Mammary epithelial cell (primary cell): ENCODE measurements at regions of chr5 and their contacts with region 1.

Region 1: DNA sequence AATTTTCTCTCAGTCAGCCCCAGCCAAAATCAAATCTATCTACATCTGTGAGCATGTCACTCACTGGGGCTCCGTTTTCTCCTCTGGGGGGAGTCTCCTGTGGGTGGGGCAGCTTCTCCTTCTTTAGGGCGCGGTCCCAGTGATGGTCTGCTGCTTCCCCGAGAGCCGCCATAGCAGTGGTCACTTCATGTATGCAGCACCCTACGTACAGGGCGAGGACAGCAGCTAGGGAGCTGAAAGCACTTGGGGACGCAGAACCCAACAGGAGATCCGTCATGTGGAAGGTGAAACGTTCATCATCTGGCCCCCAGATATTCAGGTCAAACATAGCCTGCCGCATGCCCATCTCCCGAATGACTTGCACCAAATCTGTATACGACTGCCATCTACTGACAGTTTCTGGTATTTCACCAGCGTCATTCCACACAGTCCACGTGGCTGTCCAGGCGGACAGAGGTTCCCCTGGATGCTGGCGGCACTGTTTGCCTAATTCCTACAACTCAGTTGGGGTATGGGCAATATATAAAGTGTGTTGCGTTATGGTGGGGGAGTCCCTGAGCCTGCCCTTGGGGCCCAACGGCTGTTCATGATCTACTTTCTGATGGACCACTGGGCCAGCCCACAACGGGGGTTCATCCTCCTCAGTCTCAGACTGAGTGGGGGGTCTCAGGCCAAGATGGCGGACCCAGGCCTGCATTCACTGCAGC is 795.0 kb downstream of the EFNA5 start:
- DNase-seq: peak; percentile 30
- H3K4me3 ChIP-seq: no peak overlapping the region
- H3K27ac ChIP-seq: no peak overlapping the region
- H3K4me1 ChIP-seq: peaks cover 5% of the 10 kb centered on the region
- H3K27me3 ChIP-seq: no peaks in the 10 kb centered on the region
- CTCF ChIP-seq: peak; percentile 31 to 50

Region 2: DNA sequence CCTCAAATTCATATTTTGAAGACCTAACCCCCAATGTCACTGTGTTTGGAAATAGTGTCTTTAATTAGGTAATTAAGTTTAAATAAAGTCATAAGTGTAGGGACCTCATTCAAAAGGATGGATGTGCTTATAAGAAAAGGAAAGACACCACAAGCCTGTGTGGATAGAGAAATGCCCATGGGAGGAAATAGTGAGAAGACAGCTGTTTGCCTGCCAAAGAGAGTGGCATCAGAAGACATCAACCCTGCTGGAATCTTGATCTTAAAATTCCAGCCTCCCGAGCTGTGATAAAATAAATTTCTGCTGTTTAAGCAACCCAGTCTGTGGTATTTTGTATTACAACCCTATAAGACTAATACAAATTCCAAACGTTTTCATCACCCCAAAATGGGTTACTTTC is 1445.2 kb before region 1 on chr5:
- CTCF ChIA-PET with region 1: no interaction called
- dilution Hi-C with region 1: no loop called
- in situ Hi-C with region 1: no loop called
- intact Hi-C with region 1: no loop called
- DNase-seq: no peak
- H3K4me3 ChIP-seq: no peak overlapping the region
- H3K27ac ChIP-seq: no peak overlapping the region
- H3K4me1 ChIP-seq: no peaks in the 10 kb centered on the region
- H3K27me3 ChIP-seq: no peaks in the 10 kb centered on the region
- CTCF ChIP-seq: no peak

Region 3: DNA sequence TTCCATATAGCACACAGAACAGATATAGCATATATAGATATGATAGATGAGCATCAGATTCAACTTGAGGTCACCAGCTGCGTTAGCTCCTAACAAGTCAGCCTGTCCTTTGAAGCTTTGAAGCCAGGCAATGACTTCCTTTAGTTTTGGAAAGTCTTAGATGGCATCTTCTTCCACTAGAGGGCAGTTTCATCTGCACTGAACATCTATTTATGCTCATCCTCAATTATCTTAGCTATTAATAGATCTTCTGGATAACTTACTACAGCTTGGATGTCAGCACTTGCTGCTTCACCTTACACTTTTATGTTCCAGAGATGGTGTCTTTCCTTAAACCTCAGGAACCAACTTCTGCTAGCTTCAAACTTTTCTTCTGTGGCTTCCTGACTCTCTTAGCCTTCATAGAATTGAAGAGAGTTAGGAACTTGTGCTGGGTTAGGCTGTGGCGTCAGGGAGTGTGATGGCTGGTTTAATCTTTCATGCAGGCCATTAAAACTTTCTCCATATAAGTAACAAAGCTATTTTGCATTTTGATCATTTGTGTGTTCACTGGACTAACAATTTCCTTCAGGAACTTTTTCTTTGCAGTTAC is 606.4 kb before region 1 on chr5:
- CTCF ChIA-PET with region 1: interaction called, 7 read pairs
- dilution Hi-C with region 1: no loop called
- in situ Hi-C with region 1: no loop called
- intact Hi-C with region 1: loop called (anchors 1 kb)
- DNase-seq: peak; percentile 13
- H3K4me3 ChIP-seq: no peak overlapping the region
- H3K27ac ChIP-seq: no peak overlapping the region
- H3K4me1 ChIP-seq: no peaks in the 10 kb centered on the region
- H3K27me3 ChIP-seq: no peaks in the 10 kb centered on the region
- CTCF ChIP-seq: peak; percentile 58 to 71

Region 4: GRCh38 chr5:106691701-106692100 is 184.0 kb before region 1 on chr5:
- CTCF ChIA-PET with region 1: no interaction called
- dilution Hi-C with region 1: no loop called
- in situ Hi-C with region 1: no loop called
- intact Hi-C with region 1: no loop called
- DNase-seq: no peak
- H3K4me3 ChIP-seq: no peak overlapping the region
- H3K27ac ChIP-seq: no peak overlapping the region
- H3K4me1 ChIP-seq: no peaks in the 10 kb centered on the region
- H3K27me3 ChIP-seq: no peaks in the 10 kb centered on the region
- CTCF ChIP-seq: no peak

Region 5: DNA sequence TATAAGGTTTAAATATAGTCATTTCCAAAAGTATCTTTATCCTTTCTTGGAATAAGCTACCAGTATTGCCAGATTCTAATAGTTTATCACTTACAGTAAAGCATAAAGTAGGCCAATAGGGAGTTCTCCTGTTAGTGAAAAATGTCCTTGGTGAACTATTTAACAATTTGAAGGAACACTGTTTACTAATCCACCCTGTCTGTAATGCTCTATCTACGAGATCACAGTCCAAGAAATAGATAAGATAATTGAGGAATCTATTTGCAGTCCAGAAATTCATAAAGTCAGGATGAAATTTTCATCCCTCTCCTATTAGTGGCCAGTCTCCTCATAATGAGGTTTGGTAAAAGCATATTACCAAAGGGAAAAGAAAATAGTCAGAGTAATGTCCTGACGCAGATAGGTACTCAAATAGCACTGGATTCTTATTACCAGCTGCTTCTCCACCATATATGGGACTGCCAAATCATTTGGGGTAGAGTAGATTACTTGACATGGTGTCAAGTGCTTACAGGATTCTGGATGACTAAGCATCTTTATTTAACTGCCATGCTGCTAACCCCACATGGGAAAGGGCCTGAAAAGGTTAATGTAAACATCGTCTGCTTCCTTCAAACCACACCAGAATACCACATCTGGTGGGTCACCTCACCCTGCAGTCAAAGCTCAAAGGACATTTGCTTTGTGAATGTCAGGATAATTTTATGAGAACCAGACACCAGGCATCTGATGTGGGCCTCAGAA is 13.1 kb before region 1 on chr5:
- CTCF ChIA-PET with region 1: no interaction called
- dilution Hi-C with region 1: no loop called
- in situ Hi-C with region 1: no loop called
- intact Hi-C with region 1: no loop called
- DNase-seq: no peak
- H3K4me3 ChIP-seq: no peak overlapping the region
- H3K27ac ChIP-seq: no peak overlapping the region
- H3K4me1 ChIP-seq: no peaks in the 10 kb centered on the region
- H3K27me3 ChIP-seq: no peaks in the 10 kb centered on the region
- CTCF ChIP-seq: no peak